Stomach (tissue), 19 donors: ENCODE measurements at regions of chr7 and their contacts with region 1.

Region 1: GRCh38 chr7:31735991-31736982 is 49.3 kb downstream of the PPP1R17 start:
- DNase-seq: peak; percentile 71 to 87
- H3K4me3 ChIP-seq: no peak overlapping the region
- H3K27ac ChIP-seq: no peak overlapping the region
- H3K4me1 ChIP-seq: no peaks in the 10 kb centered on the region
- H3K27me3 ChIP-seq: peaks cover 0 to 8% (median 0%) of the 10 kb centered on the region in 3 donors
- CTCF ChIP-seq: peak in 6 of 7 experiments; percentile 48 to 94 (median 82)
- EP300 ChIP-seq: no peak
- POLR2A ChIP-seq: no peak

Region 2: DNA sequence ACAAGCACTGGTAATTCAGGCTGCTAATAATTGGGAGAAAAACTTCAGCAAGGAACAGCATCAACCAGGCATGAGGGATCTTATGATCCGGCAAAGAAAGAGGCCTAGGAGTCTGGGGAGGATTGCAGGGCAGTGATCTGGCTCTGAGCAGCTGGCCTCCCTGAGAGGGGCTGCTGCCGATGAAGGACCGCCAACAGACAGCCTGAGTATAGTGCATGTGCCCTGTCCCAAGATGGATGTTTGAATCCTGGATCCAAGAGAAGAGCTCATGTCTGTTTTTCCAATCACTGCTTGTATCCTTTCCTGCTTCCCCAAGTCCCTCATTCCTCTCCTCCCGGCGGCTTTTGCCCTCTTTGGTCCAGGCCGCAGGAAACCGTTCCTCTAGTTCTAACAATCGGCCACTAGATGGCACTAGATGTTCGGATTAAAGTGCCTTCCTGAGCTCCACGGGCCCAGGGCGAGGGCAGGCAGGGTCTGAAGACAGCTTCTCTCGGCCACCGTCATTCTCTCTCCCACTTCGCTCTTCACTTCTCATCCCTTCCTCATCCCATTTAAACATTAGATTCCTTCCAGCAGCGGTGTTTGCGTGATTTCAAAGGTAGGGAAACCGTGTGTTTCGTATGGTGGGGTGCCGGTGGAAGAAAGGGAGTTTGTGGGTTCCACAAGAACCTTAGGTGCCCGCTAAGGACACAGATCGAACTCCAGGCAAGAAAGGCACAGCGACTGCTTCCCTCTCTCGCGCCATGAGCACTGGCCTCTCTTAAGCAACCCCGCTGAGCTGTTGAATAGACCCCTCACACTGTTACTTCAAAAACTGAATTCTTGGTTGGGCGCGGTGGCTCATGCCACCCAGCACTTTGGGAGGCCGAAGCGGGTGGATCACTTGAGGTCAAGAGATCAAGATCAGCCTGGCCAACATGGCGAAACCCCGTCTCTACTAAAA is 601.8 kb before region 1 on chr7:
- intact Hi-C with region 1: loop called (anchors 10 kb)
- DNase-seq: peak; percentile 74 to 92
- H3K4me3 ChIP-seq: no peak overlapping the region
- H3K27ac ChIP-seq: peak overlapping the region in 2 of 5 donors; percentile 55 to 57
- H3K4me1 ChIP-seq: peaks cover 5 to 23% (median 17%) of the 10 kb centered on the region in 4 donors
- H3K27me3 ChIP-seq: no peaks in the 10 kb centered on the region
- CTCF ChIP-seq: peak in 5 of 7 experiments; percentile 60 to 80 (median 72)
- EP300 ChIP-seq: no peak
- POLR2A ChIP-seq: no peak

Region 3: GRCh38 chr7:31456646-31457368 is 279.5 kb before region 1 on chr7:
- intact Hi-C with region 1: loop called (anchors 10 kb)
- DNase-seq: no peak
- H3K4me3 ChIP-seq: no peak overlapping the region
- H3K27ac ChIP-seq: no peak overlapping the region
- H3K4me1 ChIP-seq: no peaks in the 10 kb centered on the region
- H3K27me3 ChIP-seq: peaks cover 0 to 4% (median 0%) of the 10 kb centered on the region in 3 donors
- CTCF ChIP-seq: no peak
- EP300 ChIP-seq: no peak
- POLR2A ChIP-seq: no peak